ENCODE measurements at regions of chr12 and their contacts with region 1.

Region 1: GRCh38 chr12:131830335-131830913 is 2.2 kb downstream of the MMP17 start:
- DNase-seq: peak; percentile 57
- H3K4me3 ChIP-seq: peak overlapping the region; percentile 22 to 34
- H3K27ac ChIP-seq: peak overlapping the region; percentile 34 to 60
- H3K4me1 ChIP-seq: peaks cover 14% of the 10 kb centered on the region
- H3K27me3 ChIP-seq: peaks cover 14% of the 10 kb centered on the region
- CTCF ChIP-seq: peak in 3 of 4 experiments; percentile 47 to 69 (median 68)
- POLR2A ChIP-seq: no peak

Region 2: GRCh38 chr12:131104463-131105350 is 725.7 kb before region 1 on chr12:
- intact Hi-C with region 1: loop called (anchors 10 kb)
- DNase-seq: peak; percentile 69
- H3K4me3 ChIP-seq: no peak overlapping the region
- H3K27ac ChIP-seq: no peak overlapping the region
- H3K4me1 ChIP-seq: no peaks in the 10 kb centered on the region
- H3K27me3 ChIP-seq: no peaks in the 10 kb centered on the region
- CTCF ChIP-seq: peak; percentile 75 to 88 (median 83)
- POLR2A ChIP-seq: no peak

Region 3: DNA sequence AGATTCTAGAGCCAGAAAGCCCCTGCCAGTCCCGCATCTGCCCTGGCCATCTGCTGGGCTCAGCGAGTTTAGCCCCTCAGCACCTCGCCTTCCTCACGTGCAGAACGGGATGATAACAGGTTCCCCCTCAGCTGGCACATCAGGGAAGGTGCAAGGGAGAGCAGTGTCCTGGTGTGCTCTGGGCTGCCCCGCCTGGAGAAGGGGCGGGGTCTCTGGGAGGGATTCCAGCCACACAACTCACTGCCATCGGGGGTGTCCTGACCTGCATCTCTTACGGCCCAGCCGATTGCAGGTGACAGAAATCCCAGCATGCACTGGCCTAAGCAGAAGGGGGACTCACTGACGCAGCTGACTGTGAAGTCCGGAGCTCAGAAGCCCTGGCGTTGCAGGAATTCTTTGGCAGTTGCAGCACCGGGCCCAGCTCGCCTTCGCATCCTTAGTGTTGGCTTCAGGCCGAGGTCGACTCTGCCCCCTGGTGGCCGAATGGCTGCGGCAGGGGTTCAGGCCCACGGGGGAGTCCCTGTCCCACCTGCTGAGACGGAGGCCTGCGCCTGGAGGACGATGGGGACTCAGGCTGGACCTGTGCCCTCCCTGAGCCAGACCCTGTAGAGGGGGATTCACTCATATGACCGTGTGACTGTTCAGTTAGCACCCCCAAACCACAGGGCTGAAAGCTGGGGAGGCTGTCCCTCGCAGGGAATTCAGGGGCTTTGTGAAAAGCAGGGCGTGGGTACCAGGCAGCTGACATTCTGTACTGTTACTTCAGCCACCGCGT is 698.1 kb before region 1 on chr12:
- intact Hi-C with region 1: loop called (anchors 10 kb)
- DNase-seq: peak; percentile 28
- H3K4me3 ChIP-seq: no peak overlapping the region
- H3K27ac ChIP-seq: no peak overlapping the region
- H3K4me1 ChIP-seq: no peaks in the 10 kb centered on the region
- H3K27me3 ChIP-seq: peaks cover 2% of the 10 kb centered on the region
- CTCF ChIP-seq: peak; percentile 32 to 74 (median 67)
- POLR2A ChIP-seq: no peak

Region 4: GRCh38 chr12:131720921-131721320 is 109.5 kb before region 1 on chr12:
- intact Hi-C with region 1: no loop called
- DNase-seq: no peak
- H3K4me3 ChIP-seq: no peak overlapping the region
- H3K27ac ChIP-seq: no peak overlapping the region
- H3K4me1 ChIP-seq: no peaks in the 10 kb centered on the region
- H3K27me3 ChIP-seq: no peaks in the 10 kb centered on the region
- CTCF ChIP-seq: no peak
- POLR2A ChIP-seq: no peak

Region 5: DNA sequence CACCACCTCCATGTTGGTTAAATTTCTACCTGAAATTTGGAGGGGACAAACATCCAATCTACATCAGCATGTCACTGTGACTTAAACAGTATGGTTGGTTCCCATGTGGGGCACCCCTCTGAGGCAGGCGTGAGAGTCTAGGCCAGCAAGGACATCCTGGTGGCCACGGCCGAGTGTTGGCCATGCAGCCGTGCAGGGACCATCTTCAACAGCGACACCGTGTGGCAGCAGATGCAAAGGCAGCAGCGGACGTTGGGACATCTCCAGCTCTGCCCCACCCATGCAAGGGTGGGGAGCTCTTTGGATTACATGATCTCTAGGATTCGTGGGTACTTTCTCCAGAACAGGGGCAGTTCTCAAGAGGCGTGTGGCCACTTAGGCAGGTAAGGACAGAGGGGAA is 363.6 kb after region 1 on chr12:
- intact Hi-C with region 1: no loop called
- DNase-seq: no peak
- H3K4me3 ChIP-seq: no peak overlapping the region
- H3K27ac ChIP-seq: no peak overlapping the region
- H3K4me1 ChIP-seq: no peaks in the 10 kb centered on the region
- H3K27me3 ChIP-seq: no peaks in the 10 kb centered on the region
- CTCF ChIP-seq: no peak
- POLR2A ChIP-seq: no peak